ENCODE measurements at regions of chr14 and their contacts with region 1.

Region 1: GRCh38 chr14:105203057-105203531 is 22.0 kb upstream of the NUDT14 start:
- DNase-seq: peak; percentile 74 to 87
- H3K4me3 ChIP-seq: no peak overlapping the region
- H3K4me3 Mint-ChIP-seq: no peak overlapping the region
- H3K27ac Mint-ChIP-seq: no peak overlapping the region
- H3K4me1 ChIP-seq: 0 out of 2 replicates have a peak, but pooled peaks cover 3% of the 10 kb centered on the region
- H3K4me1 Mint-ChIP-seq: peaks cover 6% of the 10 kb centered on the region
- H3K27me3 ChIP-seq: no peaks in the 10 kb centered on the region
- H3K27me3 Mint-ChIP-seq: peaks cover 4% of the 10 kb centered on the region
- CTCF ChIP-seq: peak; percentile 91 to 93

Region 2: DNA sequence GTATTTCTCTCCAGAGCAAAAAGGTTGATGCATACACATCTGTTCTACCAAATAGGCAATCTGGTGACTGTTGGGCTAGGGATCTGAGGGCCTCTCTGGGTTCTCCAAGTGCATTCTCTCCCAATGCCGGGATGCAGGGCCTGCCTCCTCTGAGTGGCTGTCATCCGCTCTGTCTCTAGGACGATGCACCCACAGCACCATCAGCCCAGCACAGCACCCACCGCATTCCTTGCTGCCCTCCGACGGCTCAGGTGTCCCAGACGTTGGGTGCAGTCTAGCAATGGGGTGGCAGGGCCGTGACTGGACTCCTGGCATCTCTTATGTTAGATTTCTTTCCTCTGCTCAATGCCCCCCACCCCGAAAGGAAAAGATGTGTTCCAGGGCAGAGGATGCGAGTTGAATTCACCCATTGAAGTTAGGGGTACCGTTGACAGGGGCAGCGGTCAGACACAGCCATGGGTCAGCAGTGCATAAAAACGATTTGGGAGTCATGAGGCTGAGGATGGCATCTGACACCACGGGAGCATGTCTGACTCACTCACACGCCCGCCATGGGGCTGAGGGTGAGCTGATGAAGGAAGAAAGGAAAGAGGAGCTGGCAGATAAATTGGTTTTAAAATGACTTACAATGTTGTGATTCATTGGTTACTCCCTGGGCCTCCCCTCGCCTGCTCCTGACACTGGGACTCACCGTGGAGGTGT is 716.7 kb before region 1 on chr14:
- CTCF ChIA-PET with region 1: no interaction called
- POLR2A ChIA-PET with region 1: no interaction called
- intact Hi-C with region 1: no loop called
- DNase-seq: no peak
- H3K4me3 ChIP-seq: no peak overlapping the region
- H3K4me3 Mint-ChIP-seq: no peak overlapping the region
- H3K27ac Mint-ChIP-seq: no peak overlapping the region
- H3K4me1 ChIP-seq: no peaks in the 10 kb centered on the region
- H3K4me1 Mint-ChIP-seq: no peaks in the 10 kb centered on the region
- H3K27me3 ChIP-seq: peaks cover 1% of the 10 kb centered on the region; the same call in 1 of the 2 replicates
- H3K27me3 Mint-ChIP-seq: peaks cover 13% of the 10 kb centered on the region
- CTCF ChIP-seq: no peak

Region 3: GRCh38 chr14:105086833-105087307 is 116.2 kb before region 1 on chr14:
- CTCF ChIA-PET with region 1: no interaction called
- POLR2A ChIA-PET with region 1: no interaction called
- intact Hi-C with region 1: no loop called
- DNase-seq: peak; percentile 84 to 92
- H3K4me3 ChIP-seq: peak overlapping the region; percentile 43
- H3K4me3 Mint-ChIP-seq: peak overlapping the region; percentile 77
- H3K27ac Mint-ChIP-seq: peak overlapping the region; percentile 74
- H3K4me1 ChIP-seq: peaks cover 51% of the 10 kb centered on the region
- H3K4me1 Mint-ChIP-seq: peaks cover 2% of the 10 kb centered on the region
- H3K27me3 ChIP-seq: no peaks in the 10 kb centered on the region
- H3K27me3 Mint-ChIP-seq: peaks cover 13% of the 10 kb centered on the region
- CTCF ChIP-seq: peak; percentile 54 to 61

Region 4: GRCh38 chr14:105123064-105123665 is 79.9 kb before region 1 on chr14:
- CTCF ChIA-PET with region 1: no interaction called
- POLR2A ChIA-PET with region 1: no interaction called
- intact Hi-C with region 1: no loop called
- DNase-seq: no peak
- H3K4me3 ChIP-seq: no peak overlapping the region
- H3K4me3 Mint-ChIP-seq: no peak overlapping the region
- H3K27ac Mint-ChIP-seq: no peak overlapping the region
- H3K4me1 ChIP-seq: peaks cover 4% of the 10 kb centered on the region; the same call in 1 of the 2 replicates
- H3K4me1 Mint-ChIP-seq: no peaks in the 10 kb centered on the region
- H3K27me3 ChIP-seq: no peaks in the 10 kb centered on the region
- H3K27me3 Mint-ChIP-seq: no peaks in the 10 kb centered on the region
- CTCF ChIP-seq: no peak

Region 5: DNA sequence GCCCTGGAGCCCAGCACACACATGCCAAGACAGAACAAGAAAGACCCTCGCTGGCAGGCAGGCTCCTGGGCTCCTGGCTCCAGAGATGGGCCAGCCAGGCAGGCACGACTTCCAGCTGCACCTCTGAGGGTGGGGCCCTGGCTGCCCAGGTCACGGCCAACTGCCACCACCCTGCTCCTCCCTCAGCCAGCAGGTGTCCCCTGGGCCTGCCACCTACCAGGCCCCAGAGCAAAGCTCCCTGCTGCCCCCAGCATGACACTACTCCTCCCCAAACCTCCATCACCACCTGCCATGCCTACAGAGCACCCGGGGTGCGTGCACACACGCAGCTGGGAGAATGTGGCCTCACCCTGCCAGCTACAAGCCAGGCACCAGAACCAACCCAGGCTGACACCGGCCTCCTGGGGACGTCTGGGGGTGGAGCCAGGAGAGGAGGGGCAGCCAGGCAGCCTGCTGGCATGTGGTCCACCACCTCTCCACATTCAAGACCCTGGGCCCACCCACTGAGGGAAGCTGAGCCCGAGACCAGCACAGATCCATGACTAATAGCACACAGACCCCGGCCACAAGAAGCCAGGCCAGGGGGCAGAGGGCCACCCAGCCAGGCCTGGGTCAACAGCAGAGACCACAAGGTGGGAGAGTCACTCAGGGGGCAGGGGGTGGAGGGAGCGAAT is 37.9 kb before region 1 on chr14:
- CTCF ChIA-PET with region 1: no interaction called
- POLR2A ChIA-PET with region 1: no interaction called
- intact Hi-C with region 1: no loop called
- DNase-seq: no peak
- H3K4me3 ChIP-seq: no peak overlapping the region
- H3K4me3 Mint-ChIP-seq: no peak overlapping the region
- H3K27ac Mint-ChIP-seq: no peak overlapping the region
- H3K4me1 ChIP-seq: peaks cover 6% of the 10 kb centered on the region
- H3K4me1 Mint-ChIP-seq: no peaks in the 10 kb centered on the region
- H3K27me3 ChIP-seq: no peaks in the 10 kb centered on the region; the same call in 1 of the 2 replicates
- H3K27me3 Mint-ChIP-seq: no peaks in the 10 kb centered on the region
- CTCF ChIP-seq: no peak

Region 6: DNA sequence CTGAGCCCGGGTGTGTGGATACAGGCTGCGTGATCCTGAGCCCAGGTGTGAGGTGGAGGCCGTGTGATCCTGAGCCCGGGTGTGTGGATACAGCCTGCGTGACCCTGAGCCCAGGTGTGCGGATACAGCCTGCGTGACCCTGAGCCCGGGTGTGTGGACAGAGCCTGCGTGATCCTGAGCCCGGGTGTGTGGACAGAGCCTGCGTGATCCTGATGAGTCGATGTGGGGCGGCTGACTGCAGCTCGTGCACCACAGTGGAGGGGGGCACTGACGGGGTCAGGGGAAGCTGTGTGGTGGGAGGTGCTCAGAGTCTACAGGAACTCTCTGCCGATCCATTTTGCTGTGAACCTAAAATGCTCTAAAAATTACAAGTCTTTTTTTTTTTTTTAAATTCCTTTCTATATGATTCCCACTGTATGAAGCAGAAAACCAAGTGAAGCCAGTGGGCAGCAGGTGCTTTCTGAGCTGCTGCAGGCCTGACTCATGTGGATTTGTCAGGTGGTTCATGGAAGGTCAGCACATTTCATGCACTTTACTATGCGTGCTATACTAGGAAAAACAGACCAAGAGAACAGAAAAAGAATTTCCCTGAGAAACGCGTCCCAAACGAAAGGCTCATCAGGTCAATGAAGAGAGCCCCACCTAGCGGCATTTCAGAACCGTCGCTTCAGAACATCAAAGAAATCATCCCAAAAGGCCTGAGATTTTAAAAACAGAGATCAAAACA is 78.4 kb after region 1 on chr14:
- CTCF ChIA-PET with region 1: no interaction called
- POLR2A ChIA-PET with region 1: no interaction called
- intact Hi-C with region 1: loop called (anchors 2 kb)
- DNase-seq: peak in 1 of 2 experiments; percentile 29
- H3K4me3 ChIP-seq: no peak overlapping the region
- H3K4me3 Mint-ChIP-seq: no peak overlapping the region
- H3K27ac Mint-ChIP-seq: no peak overlapping the region
- H3K4me1 ChIP-seq: no peaks in the 10 kb centered on the region
- H3K4me1 Mint-ChIP-seq: no peaks in the 10 kb centered on the region
- H3K27me3 ChIP-seq: no peaks in the 10 kb centered on the region
- H3K27me3 Mint-ChIP-seq: no peaks in the 10 kb centered on the region
- CTCF ChIP-seq: peak; percentile 34 to 70

Region 7: GRCh38 chr14:105351920-105352851 is 149.1 kb after region 1 on chr14:
- CTCF ChIA-PET with region 1: interaction called, 11 read pairs
- POLR2A ChIA-PET with region 1: no interaction called
- intact Hi-C with region 1: loop called (anchors 1 kb)
- DNase-seq: peak; percentile 85 to 91
- H3K4me3 ChIP-seq: no peak overlapping the region
- H3K4me3 Mint-ChIP-seq: no peak overlapping the region
- H3K27ac Mint-ChIP-seq: no peak overlapping the region
- H3K4me1 ChIP-seq: no peaks in the 10 kb centered on the region
- H3K4me1 Mint-ChIP-seq: no peaks in the 10 kb centered on the region
- H3K27me3 ChIP-seq: no peaks in the 10 kb centered on the region
- H3K27me3 Mint-ChIP-seq: no peaks in the 10 kb centered on the region
- CTCF ChIP-seq: peak; percentile 79 to 83

Measured in Caco-2 (cell line).